HEK293 (cell line): ENCODE measurements at regions of chr6 and their contacts with region 1.

Region 1: GRCh38 chr6:31128093-31128676 is 7.9 kb upstream of the CDSN start:
- H3K4me3 ChIP-seq: no peak overlapping the region
- H3K27ac ChIP-seq: no peak overlapping the region
- H3K4me1 ChIP-seq: 0 out of 2 replicates have a peak, but pooled peaks cover 3% of the 10 kb centered on the region
- CTCF ChIP-seq: peak; percentile 57; the same call in 1 of the 2 replicates

Region 2: DNA sequence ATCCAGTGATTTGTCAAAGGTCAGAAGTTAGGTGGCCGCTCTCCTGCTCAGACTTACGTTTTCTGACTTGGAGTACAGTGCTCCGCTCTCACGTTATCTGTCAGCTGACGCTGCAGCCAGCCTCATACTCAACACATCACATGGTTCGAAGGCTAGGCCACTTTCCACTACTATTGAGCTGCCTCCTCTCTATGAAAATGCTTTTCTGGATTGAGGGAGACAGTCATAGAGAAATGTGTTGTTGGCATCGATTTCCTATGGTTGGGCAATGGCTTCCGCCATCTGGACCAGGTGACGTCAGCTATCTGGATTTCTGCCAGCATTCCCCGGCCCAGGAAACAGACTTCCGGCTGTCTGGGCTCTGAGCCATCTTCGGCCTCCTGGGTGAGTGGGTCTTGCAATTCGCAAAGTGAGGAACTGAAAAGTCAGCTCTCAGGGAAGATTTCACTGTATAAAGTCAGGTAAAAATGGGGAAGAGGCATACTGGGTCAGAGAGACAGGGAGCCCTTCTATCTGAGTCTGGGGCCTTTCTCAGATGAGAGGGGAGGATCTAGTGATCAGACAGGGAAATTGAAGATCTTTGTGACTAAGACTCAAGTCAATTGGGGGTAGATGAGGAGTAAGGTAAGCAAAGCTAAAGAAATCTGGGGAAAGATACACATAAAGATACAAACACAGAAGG is 346.3 kb before region 1 on chr6:
- CTCF ChIA-PET with region 1: no interaction called
- POLR2A ChIA-PET with region 1: no interaction called
- H3K4me3 ChIP-seq: peak overlapping the region; percentile 33
- H3K27ac ChIP-seq: peak overlapping the region; percentile 65
- H3K4me1 ChIP-seq: peaks cover 10% of the 10 kb centered on the region; the same call in 1 of the 2 replicates
- CTCF ChIP-seq: no peak

Region 3: DNA sequence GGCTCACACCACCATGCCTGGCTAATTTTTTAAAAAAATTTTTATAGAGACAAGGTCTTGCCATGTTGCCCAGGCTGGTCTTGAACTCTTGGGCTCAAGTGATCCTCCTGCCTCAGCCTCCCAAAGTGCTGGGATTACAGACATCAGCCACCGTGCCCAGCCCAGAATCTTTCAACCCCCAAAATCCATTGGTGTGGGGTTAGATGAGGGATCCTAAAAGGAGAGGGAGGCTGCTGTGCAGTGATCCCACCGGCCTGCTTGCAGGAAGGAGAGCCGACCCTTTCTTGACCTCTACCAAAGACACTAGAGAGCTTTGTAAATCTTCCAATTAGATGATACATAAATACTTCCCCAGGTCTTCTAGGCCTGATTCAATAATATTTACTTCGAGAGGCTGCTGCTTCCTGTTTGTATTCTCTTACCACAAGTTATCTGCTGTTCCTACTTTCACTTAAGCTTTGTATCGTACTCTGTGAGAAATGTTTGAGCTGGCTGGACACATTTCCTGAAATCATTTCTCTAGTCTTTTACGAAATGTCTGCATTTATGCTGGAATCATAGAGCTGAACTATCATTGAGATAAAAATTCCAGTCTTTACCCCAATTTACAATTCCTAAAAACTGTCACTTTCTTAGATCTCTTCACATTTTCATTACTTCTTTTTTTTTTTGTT is 334.5 kb before region 1 on chr6:
- CTCF ChIA-PET with region 1: no interaction called
- POLR2A ChIA-PET with region 1: no interaction called
- H3K4me3 ChIP-seq: no peak overlapping the region
- H3K27ac ChIP-seq: no peak overlapping the region
- H3K4me1 ChIP-seq: no peaks in the 10 kb centered on the region
- CTCF ChIP-seq: no peak

Region 4: GRCh38 chr6:31094389-31094881 is 33.8 kb before region 1 on chr6:
- CTCF ChIA-PET with region 1: interaction called, 29 read pairs
- POLR2A ChIA-PET with region 1: no interaction called
- H3K4me3 ChIP-seq: no peak overlapping the region
- H3K27ac ChIP-seq: no peak overlapping the region
- H3K4me1 ChIP-seq: no peaks in the 10 kb centered on the region
- CTCF ChIP-seq: no peak

Region 5: GRCh38 chr6:31103136-31103535 is 25.0 kb before region 1 on chr6:
- CTCF ChIA-PET with region 1: interaction called, 14 read pairs
- POLR2A ChIA-PET with region 1: no interaction called
- H3K4me3 ChIP-seq: no peak overlapping the region
- H3K27ac ChIP-seq: no peak overlapping the region
- H3K4me1 ChIP-seq: no peaks in the 10 kb centered on the region
- CTCF ChIP-seq: no peak

Region 6: GRCh38 chr6:31114970-31115849 is 13.0 kb before region 1 on chr6:
- CTCF ChIA-PET with region 1: interaction called, 60 read pairs
- POLR2A ChIA-PET with region 1: interaction called, 5 read pairs
- H3K4me3 ChIP-seq: no peak overlapping the region
- H3K27ac ChIP-seq: no peak overlapping the region
- H3K4me1 ChIP-seq: peaks cover 7% of the 10 kb centered on the region
- CTCF ChIP-seq: peak; percentile 42; the same call in 1 of the 2 replicates

Region 7: GRCh38 chr6:31143148-31143547 is 15.0 kb after region 1 on chr6:
- CTCF ChIA-PET with region 1: interaction called, 49 read pairs
- POLR2A ChIA-PET with region 1: interaction called, 6 read pairs
- H3K4me3 ChIP-seq: no peak overlapping the region
- H3K27ac ChIP-seq: no peak overlapping the region
- H3K4me1 ChIP-seq: no peaks in the 10 kb centered on the region
- CTCF ChIP-seq: no peak